ENCODE measurements at regions of chr5 and their contacts with region 1.

Region 1: DNA sequence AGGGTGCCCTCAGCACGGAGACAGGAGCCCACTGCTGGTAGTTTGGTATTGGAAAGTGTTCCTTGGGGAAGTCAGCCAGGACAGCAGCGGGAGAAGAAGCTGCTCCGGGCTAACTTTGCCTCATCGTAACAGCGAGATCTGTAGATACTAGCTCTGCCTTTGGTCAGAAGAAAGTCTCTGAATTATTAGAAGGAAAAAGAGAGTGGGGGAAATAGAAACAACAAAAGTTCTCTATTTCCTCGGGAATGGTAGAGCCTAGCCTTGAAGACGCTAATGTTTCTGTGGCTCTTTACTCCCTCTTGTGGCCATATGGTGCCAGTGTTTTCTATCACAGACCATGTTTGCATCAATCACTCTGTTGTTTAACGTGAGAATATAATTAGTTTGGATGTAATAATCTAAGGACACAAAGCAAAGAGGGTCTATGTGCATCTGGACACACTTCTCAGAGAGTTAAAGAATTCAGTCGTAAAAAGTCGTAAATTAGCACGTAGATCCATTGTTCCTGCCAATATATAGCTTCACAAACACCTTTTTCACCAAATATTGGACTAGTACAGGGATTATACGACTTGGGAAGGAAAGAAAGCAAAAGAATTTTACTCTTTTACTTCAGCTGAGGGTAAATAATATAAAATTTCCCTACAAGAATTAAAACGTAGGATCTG is 40.2 kb upstream of the HSD17B4 start:
- DNase-seq: peak; percentile 21 to 65
- ATAC-seq: peak; percentile 83 to 97 (median 94)
- H3K4me3 ChIP-seq: peak overlapping the region; percentile 22 to 57 (median 52)
- H3K27ac ChIP-seq: peak overlapping the region in 8 of 10 donors; percentile 11 to 91 (median 62)
- H3K4me1 ChIP-seq: peaks cover 0 to 34% (median 0%) of the 10 kb centered on the region in 9 donors
- H3K27me3 ChIP-seq: peaks cover 0 to 18% (median 0%) of the 10 kb centered on the region in 7 donors
- CTCF ChIP-seq: peak; percentile 85 to 96 (median 93)

Region 2: DNA sequence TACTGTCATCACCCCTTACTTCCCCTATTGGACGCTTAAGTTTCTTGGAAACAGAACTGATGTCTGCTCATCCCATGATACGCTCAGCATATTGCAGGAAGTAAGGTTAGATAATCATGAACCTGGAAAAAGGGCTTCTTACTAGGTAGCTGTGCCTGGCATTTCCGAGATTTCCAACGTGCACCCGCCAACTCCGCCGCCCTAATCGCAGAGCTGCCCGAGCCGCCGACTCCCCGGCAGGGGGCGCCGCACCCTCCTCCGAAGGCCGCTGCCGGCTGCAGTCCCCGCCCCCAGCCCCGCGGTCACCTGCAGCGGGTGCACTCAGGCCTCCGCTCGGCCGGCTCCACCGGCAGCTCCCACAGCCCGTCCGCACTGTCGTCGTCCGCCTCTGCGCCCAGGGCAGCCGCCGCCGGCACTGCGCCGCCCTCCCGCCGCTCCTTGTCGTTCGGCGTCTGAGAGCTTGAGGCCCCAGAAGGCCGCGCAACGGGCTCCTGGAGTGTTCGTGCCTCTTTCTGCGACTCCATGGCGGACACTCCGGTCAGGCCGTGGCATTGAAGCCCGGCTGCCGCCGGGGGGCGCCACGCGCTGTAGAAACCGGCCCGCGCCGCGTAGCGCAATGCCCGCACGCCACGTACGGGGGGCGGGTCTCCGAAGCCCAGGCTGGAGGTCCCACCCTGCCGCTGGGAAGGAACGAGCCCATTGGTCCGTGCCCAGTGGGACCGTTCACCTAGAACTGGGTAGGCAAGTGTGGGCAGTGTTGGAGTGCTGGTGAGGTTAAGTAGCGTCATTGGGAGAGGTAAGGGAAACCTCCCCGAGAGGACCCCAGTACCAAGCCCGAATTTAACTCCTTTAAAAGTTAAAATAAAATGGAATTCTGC is 423.8 kb before region 1 on chr5 and contains the start of gene DTWD2:
- intact Hi-C with region 1: loop called in 9 of 10 experiments (anchors 1 to 10 kb)
- DNase-seq: peak; percentile 92 to 94
- ATAC-seq: peak; percentile 96 to 99 (median 98)
- H3K4me3 ChIP-seq: peak within 1 kb of the TSS; percentile 60 to 92 (median 80)
- H3K27ac ChIP-seq: peak within 1 kb of the TSS; percentile 79 to 98 (median 94)
- H3K4me1 ChIP-seq: peaks cover 0 to 29% (median 13%) of the 10 kb centered on the region in 9 donors
- H3K27me3 ChIP-seq: no peaks in the 10 kb centered on the region
- CTCF ChIP-seq: peak; percentile 80 to 95 (median 90)
- total RNA-seq, gene DTWD2: 8.9 to 14.8 (median 12.8) TPM

Region 3: GRCh38 chr5:119274767-119275130 is 137.3 kb before region 1 on chr5:
- intact Hi-C with region 1: loop called in 4 of 10 experiments (anchors 5 to 10 kb)
- DNase-seq: no peak
- ATAC-seq: no peak
- H3K4me3 ChIP-seq: no peak overlapping the region
- H3K27ac ChIP-seq: peak overlapping the region in 1 of 10 donors; percentile 93
- H3K4me1 ChIP-seq: peaks cover 0 to 91% (median 21%) of the 10 kb centered on the region in 9 donors
- H3K27me3 ChIP-seq: no peaks in the 10 kb centered on the region
- CTCF ChIP-seq: no peak

Region 4: DNA sequence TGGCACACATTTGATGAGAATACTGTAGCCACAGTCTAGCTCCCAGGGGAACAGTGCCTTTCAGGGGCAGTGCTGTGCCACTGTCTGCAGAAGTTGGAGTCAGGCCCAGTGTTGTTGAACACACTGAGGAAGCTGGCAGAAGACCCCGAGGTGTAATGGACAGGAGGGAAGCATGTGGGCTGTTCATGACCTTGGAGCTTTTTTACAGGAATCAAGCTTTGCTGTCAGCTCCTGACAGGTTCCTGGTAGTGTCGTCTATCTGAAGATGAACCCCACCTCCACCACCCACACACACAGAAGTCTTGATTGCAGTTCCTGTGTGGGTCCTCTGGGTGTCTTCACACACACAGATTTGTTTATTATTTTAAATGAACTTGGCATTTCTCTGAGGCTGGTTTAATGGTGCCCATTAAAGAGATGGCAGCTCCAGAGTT is 96.5 kb before region 1 on chr5:
- intact Hi-C with region 1: loop called in 6 of 10 experiments (anchors 1 to 10 kb)
- DNase-seq: no peak
- ATAC-seq: peak; percentile 34 to 89 (median 65)
- H3K4me3 ChIP-seq: no peak overlapping the region
- H3K27ac ChIP-seq: peak overlapping the region in 1 of 10 donors; percentile 12
- H3K4me1 ChIP-seq: peaks cover 0 to 57% (median 0%) of the 10 kb centered on the region in 9 donors
- H3K27me3 ChIP-seq: no peaks in the 10 kb centered on the region
- CTCF ChIP-seq: peak in 5 of 9 donors; percentile 29 to 52 (median 46)

Region 5: GRCh38 chr5:119340597-119341218 is 71.4 kb before region 1 on chr5:
- intact Hi-C with region 1: loop called in 3 of 10 experiments (anchors 5 to 10 kb)
- DNase-seq: no peak
- ATAC-seq: peak in 2 of 8 donors; percentile 14 to 28
- H3K4me3 ChIP-seq: peak overlapping the region in 1 of 10 donors; percentile 26
- H3K27ac ChIP-seq: peak overlapping the region in 1 of 10 donors; percentile 79
- H3K4me1 ChIP-seq: peaks cover 0 to 98% (median 13%) of the 10 kb centered on the region in 9 donors
- H3K27me3 ChIP-seq: no peaks in the 10 kb centered on the region
- CTCF ChIP-seq: no peak

Region 6: DNA sequence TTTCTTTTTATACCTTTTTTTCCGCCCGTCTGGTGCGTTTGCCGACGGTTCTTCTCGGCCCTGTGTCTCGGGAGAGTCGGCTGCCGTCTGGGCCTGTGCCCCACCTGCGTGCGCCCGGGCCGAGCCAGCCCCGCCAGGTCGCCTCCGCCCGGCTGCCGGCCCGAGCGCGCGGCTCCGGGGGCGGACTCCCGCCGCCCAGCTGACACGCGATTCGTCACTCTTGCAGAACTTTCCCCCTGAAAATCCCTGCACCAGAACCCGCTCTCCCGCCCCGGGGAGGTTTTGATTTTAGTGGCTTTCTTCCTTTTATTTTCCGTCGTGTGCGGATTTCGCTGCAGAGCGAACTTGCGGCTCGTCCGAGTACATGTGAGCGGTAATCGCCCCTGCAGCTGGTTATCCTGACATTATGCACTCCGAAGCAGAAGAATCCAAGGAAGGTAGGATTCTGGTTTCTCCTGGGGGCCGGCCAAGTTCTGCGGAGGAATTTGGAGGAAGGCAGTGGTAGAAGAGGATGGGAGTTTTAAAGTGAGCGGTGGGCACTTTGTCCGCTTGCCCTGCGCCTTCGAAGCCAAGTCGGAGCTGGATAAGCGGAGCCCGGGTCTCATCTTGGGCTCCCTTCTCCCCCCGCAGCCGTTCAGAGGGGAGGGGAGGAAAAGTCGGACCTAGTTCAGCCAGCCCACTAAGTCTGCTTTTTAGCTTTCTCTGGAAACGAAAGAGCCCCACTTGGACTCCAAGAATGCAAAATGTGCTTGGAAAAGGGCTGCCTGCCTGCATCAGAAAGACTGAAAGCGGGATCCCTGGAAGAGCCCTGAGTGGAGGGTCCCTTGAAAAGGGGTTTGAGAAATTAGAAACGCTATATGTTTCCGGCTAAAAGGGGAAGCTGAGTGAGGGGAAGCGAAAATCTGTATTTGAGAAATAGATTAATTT is 56.1 kb before region 1 on chr5 and contains the start of gene TNFAIP8:
- intact Hi-C with region 1: loop called in 1 of 10 experiments (anchors 5 kb)
- DNase-seq: peak; percentile 60
- ATAC-seq: peak; percentile 83 to 92 (median 86)
- H3K4me3 ChIP-seq: peak within 1 kb of the TSS; percentile 38 to 83 (median 64)
- H3K27ac ChIP-seq: peak within 1 kb of the TSS in 8 of 10 donors; percentile 12 to 92 (median 54)
- H3K4me1 ChIP-seq: peaks cover 0 to 71% (median 12%) of the 10 kb centered on the region in 9 donors
- H3K27me3 ChIP-seq: no peaks in the 10 kb centered on the region
- CTCF ChIP-seq: no peak
- total RNA-seq, gene TNFAIP8: 3.3 to 30.8 (median 10.1) TPM

Measured in heart right ventricle (tissue), 16 donors.